ENCODE measurements at regions of chr3 and their contacts with region 1.

Region 1: DNA sequence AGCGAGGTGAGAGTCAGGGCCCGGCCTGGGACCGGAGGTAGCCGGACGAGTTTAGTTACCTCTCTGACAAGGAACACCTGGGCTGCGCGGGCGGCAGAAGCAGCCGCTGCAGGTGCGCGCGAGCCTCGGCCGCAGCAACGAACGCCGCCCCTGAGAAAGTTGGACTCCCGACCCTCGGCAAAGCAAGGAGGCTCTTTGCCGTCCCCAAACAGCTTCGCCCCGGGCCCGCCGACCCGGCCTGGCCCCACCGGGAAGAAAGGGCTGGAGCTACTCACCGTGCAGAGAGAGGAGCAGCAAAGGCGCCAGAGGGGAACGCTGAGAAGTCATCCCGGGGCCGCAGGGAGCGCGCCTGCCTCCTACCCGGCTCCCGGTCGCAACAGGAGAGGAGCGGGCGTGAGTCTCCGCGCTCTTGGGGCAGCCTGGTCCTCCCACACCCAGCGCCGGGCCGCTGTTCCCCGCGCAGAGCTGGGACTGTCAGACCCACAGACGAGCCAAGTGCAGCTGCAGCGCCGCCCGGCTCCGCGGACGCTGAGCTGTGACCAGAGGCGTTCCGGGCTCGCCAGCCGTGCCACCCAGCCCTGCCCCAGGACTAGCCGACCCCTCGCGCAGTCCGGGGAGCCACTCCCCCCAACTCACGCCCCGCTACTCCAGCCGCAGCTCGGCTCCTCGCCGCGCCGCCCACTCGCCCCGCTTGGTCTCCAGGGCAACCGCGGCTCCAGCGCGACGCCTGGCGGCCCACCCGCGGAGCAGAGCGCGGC is at the start of gene IGSF11:
- DNase-seq: peak; percentile 64 to 71
- H3K4me3 ChIP-seq: peak within 1 kb of the TSS; percentile 49
- H3K4me3 Mint-ChIP-seq: peak within 1 kb of the TSS; percentile 84
- H3K27ac Mint-ChIP-seq: no peak within 1 kb of the TSS
- H3K4me1 ChIP-seq: 0 out of 2 replicates have a peak, but pooled peaks cover 4% of the 10 kb centered on the region
- H3K4me1 Mint-ChIP-seq: no peaks in the 10 kb centered on the region
- H3K27me3 ChIP-seq: peaks cover 2% of the 10 kb centered on the region; the same call in 1 of the 2 replicates
- H3K27me3 Mint-ChIP-seq: peaks cover 20% of the 10 kb centered on the region
- CTCF ChIP-seq: peak; percentile 25 to 53
- total RNA-seq, gene IGSF11: 0.37 and 0.41 TPM in 2 replicates

Region 2: DNA sequence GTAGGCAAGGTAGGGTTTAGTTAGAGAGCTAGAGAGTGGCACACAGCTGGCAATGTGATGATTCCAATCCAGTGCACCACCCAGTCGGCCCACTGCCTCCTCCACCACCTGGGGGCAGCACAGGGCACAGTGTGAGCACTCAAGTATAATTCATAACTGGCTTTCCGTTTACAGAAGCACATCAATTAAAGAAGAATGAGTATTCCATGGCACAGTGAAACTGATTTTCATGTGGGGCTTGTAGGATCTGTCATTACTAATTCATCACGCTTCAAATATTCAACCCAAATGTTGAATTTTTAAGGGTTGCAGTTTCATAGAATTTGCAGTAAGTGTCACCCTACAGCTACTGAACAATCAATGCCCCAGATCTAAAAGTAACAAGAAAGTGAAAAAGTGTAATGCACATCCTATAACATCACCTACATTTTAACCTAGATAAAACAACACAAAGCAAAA is 149.7 kb before region 1 on chr3:
- CTCF ChIA-PET with region 1: interaction called, 106 read pairs
- POLR2A ChIA-PET with region 1: no interaction called
- intact Hi-C with region 1: loop called (anchors 1 kb)
- DNase-seq: peak; percentile 57 to 73
- H3K4me3 ChIP-seq: no peak overlapping the region
- H3K4me3 Mint-ChIP-seq: no peak overlapping the region
- H3K27ac Mint-ChIP-seq: no peak overlapping the region
- H3K4me1 ChIP-seq: no peaks in the 10 kb centered on the region
- H3K4me1 Mint-ChIP-seq: no peaks in the 10 kb centered on the region
- H3K27me3 ChIP-seq: no peaks in the 10 kb centered on the region; the same call in 1 of the 2 replicates
- H3K27me3 Mint-ChIP-seq: peaks cover 22% of the 10 kb centered on the region
- CTCF ChIP-seq: peak; percentile 87 to 93

Region 3: GRCh38 chr3:118943597-118943996 is 90.8 kb before region 1 on chr3:
- CTCF ChIA-PET with region 1: no interaction called
- POLR2A ChIA-PET with region 1: no interaction called
- intact Hi-C with region 1: loop called (anchors 10 kb)
- DNase-seq: no peak
- H3K4me3 ChIP-seq: no peak overlapping the region
- H3K4me3 Mint-ChIP-seq: no peak overlapping the region
- H3K27ac Mint-ChIP-seq: no peak overlapping the region
- H3K4me1 ChIP-seq: peaks cover 3% of the 10 kb centered on the region; the same call in 1 of the 2 replicates
- H3K4me1 Mint-ChIP-seq: peaks cover 3% of the 10 kb centered on the region
- H3K27me3 ChIP-seq: no peaks in the 10 kb centered on the region
- H3K27me3 Mint-ChIP-seq: peaks cover 2% of the 10 kb centered on the region
- CTCF ChIP-seq: no peak

Region 4: DNA sequence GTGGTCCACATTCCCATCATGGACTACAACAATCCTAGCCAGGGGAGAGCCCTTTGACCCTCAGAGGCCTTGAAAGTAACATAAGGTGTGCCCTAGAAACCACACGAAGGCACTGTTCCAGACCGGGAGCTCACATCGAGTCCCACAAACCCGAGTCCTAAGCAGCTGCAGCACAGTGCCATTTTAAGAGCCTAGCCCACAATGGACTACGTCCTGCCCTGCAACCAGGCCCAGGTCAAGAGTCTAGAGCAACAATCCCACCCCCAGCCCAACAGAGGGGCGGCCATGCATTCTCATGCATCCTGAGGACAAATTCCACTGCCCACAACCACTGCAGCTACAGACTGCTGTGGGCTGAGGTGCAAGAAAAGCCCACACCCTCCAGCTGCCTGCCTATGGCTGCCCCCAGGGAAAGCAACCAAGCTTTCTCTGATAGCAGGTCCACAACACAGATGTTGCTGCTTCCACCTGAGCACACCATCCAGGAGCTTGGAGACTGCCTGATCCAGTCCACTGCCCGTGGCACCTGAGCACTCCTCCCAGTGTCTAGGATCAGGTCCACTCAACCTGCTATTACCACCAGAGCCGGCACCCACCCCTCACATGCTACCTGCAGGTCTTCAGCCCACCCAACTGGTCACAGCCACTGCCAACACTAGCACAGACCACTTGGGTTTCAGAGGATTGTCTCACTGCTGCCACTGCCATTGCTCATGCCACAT is 56.6 kb before region 1 on chr3:
- CTCF ChIA-PET with region 1: no interaction called
- POLR2A ChIA-PET with region 1: no interaction called
- intact Hi-C with region 1: no loop called
- DNase-seq: no peak
- H3K4me3 ChIP-seq: no peak overlapping the region
- H3K4me3 Mint-ChIP-seq: no peak overlapping the region
- H3K27ac Mint-ChIP-seq: no peak overlapping the region
- H3K4me1 ChIP-seq: no peaks in the 10 kb centered on the region
- H3K4me1 Mint-ChIP-seq: no peaks in the 10 kb centered on the region
- H3K27me3 ChIP-seq: no peaks in the 10 kb centered on the region; the same call in 1 of the 2 replicates
- H3K27me3 Mint-ChIP-seq: peaks cover 5% of the 10 kb centered on the region
- CTCF ChIP-seq: no peak

Region 5: GRCh38 chr3:119098619-119099222 is 64.3 kb after region 1 on chr3:
- CTCF ChIA-PET with region 1: interaction called, 4 read pairs
- POLR2A ChIA-PET with region 1: no interaction called
- intact Hi-C with region 1: loop called (anchors 1 kb)
- DNase-seq: peak in 1 of 2 experiments; percentile 49
- H3K4me3 ChIP-seq: no peak overlapping the region
- H3K4me3 Mint-ChIP-seq: no peak overlapping the region
- H3K27ac Mint-ChIP-seq: no peak overlapping the region
- H3K4me1 ChIP-seq: no peaks in the 10 kb centered on the region
- H3K4me1 Mint-ChIP-seq: no peaks in the 10 kb centered on the region
- H3K27me3 ChIP-seq: no peaks in the 10 kb centered on the region
- H3K27me3 Mint-ChIP-seq: peaks cover 5% of the 10 kb centered on the region
- CTCF ChIP-seq: peak; percentile 65 to 68

Region 6: GRCh38 chr3:119161240-119161639 is 126.8 kb after region 1 on chr3:
- CTCF ChIA-PET with region 1: no interaction called
- POLR2A ChIA-PET with region 1: no interaction called
- intact Hi-C with region 1: no loop called
- DNase-seq: no peak
- H3K4me3 ChIP-seq: no peak overlapping the region
- H3K4me3 Mint-ChIP-seq: no peak overlapping the region
- H3K27ac Mint-ChIP-seq: no peak overlapping the region
- H3K4me1 ChIP-seq: peaks cover 15% of the 10 kb centered on the region
- H3K4me1 Mint-ChIP-seq: peaks cover 6% of the 10 kb centered on the region
- H3K27me3 ChIP-seq: no peaks in the 10 kb centered on the region
- H3K27me3 Mint-ChIP-seq: no peaks in the 10 kb centered on the region
- CTCF ChIP-seq: no peak

Measured in Caco-2 (cell line).